ENCODE measurements at regions of chr17 and their contacts with region 1.

Region 1: DNA sequence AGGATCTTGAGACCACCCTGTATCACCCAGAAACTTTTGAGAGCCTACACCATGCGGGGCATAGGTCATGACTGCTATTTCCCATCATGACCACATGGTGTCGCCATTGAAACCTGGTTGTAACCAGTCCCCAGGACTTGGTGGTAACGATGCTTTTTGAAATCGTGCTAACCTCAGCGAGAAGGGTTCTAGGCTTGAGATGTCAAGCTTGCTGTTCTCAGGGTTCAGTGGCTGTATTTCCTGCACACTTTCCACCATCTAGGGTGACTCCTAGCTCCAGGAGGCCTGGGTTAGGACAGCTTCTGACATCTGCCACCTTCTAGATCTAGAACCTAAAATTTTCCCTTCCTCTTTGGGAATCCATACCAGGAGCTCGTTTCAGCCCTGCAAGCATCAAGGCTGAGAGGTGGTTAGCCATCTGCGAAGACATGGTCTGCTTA is 13.0 kb upstream of the SPNS3 start:
- DNase-seq: peak; percentile 61
- H3K4me3 Mint-ChIP-seq: no peak overlapping the region
- H3K27ac Mint-ChIP-seq: no peak overlapping the region
- H3K4me1 Mint-ChIP-seq: no peaks in the 10 kb centered on the region
- H3K27me3 Mint-ChIP-seq: no peaks in the 10 kb centered on the region
- CTCF ChIP-seq: no peak

Region 2: GRCh38 chr17:4498461-4499397 is 78.0 kb after region 1 on chr17 and contains the start of gene SPNS2:
- CTCF ChIA-PET with region 1: interaction called, 4 read pairs
- intact Hi-C with region 1: loop called (anchors 5 kb)
- DNase-seq: peak; percentile 79
- H3K4me3 Mint-ChIP-seq: peak within 1 kb of the TSS; percentile 78
- H3K27ac Mint-ChIP-seq: peak within 1 kb of the TSS; percentile 63
- H3K4me1 Mint-ChIP-seq: peaks cover 43% of the 10 kb centered on the region
- H3K27me3 Mint-ChIP-seq: no peaks in the 10 kb centered on the region
- CTCF ChIP-seq: no peak
- total RNA-seq, gene SPNS2: 63.4 and 104 TPM in 2 replicates

Region 3: DNA sequence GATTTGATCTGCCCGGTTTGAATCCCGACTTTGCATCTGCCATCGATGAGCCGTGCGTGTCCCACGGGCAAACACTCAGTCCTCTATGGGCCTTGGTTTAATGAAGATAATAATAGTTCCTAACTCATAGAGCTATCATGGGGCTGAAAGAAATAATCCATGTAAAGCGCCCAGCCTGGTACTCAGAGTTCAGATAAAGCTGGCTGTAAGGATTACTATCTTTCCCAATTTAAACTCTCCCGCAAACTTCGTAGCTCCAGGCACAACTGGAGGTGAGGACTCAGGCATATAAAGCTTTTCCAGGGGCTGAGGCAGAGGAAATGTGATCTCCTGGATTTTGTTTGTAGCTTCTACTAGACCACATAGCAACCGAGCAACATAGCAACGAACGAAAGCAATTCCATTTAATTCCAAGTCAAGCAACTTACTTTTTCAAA is 204.5 kb after region 1 on chr17:
- CTCF ChIA-PET with region 1: interaction called, 5 read pairs
- intact Hi-C with region 1: loop called (anchors 5 kb)
- DNase-seq: no peak
- H3K4me3 Mint-ChIP-seq: no peak overlapping the region
- H3K27ac Mint-ChIP-seq: no peak overlapping the region
- H3K4me1 Mint-ChIP-seq: no peaks in the 10 kb centered on the region
- H3K27me3 Mint-ChIP-seq: peaks cover 13% of the 10 kb centered on the region
- CTCF ChIP-seq: no peak